Ascending aorta (tissue), 2 donors: ENCODE measurements at regions of chr17 and their contacts with region 1.

Region 1: GRCh38 chr17:55264645-55265298 is at the start of gene HLF:
- DNase-seq: peak in 1 of 2 donors; percentile 86
- H3K4me3 ChIP-seq: peak within 1 kb of the TSS; percentile 60 to 85
- H3K27ac ChIP-seq: peak within 1 kb of the TSS; percentile 85 to 90
- H3K4me1 ChIP-seq: peaks cover 10 to 17% of the 10 kb centered on the region in 2 donors
- H3K27me3 ChIP-seq: no peaks in the 10 kb centered on the region
- CTCF ChIP-seq: no peak
- total RNA-seq, gene HLF: 11.3 TPM

Region 2: GRCh38 chr17:54968262-54968987 is 296.3 kb before region 1 on chr17 and contains the starts of genes COX11 and STXBP4:
- intact Hi-C with region 1: loop called (anchors 2 kb)
- DNase-seq: peak; percentile 90 to 98
- H3K4me3 ChIP-seq: peak within 1 kb of the TSS; percentile 75 to 95
- H3K27ac ChIP-seq: peak within 1 kb of the TSS; percentile 82 to 90
- H3K4me1 ChIP-seq: peaks cover 4 to 11% of the 10 kb centered on the region in 2 donors
- H3K27me3 ChIP-seq: no peaks in the 10 kb centered on the region
- CTCF ChIP-seq: peak in 1 of 3 experiments; percentile 51
- total RNA-seq, gene COX11: 19.6 TPM
- total RNA-seq, gene STXBP4: 4.9 TPM

Region 3: DNA sequence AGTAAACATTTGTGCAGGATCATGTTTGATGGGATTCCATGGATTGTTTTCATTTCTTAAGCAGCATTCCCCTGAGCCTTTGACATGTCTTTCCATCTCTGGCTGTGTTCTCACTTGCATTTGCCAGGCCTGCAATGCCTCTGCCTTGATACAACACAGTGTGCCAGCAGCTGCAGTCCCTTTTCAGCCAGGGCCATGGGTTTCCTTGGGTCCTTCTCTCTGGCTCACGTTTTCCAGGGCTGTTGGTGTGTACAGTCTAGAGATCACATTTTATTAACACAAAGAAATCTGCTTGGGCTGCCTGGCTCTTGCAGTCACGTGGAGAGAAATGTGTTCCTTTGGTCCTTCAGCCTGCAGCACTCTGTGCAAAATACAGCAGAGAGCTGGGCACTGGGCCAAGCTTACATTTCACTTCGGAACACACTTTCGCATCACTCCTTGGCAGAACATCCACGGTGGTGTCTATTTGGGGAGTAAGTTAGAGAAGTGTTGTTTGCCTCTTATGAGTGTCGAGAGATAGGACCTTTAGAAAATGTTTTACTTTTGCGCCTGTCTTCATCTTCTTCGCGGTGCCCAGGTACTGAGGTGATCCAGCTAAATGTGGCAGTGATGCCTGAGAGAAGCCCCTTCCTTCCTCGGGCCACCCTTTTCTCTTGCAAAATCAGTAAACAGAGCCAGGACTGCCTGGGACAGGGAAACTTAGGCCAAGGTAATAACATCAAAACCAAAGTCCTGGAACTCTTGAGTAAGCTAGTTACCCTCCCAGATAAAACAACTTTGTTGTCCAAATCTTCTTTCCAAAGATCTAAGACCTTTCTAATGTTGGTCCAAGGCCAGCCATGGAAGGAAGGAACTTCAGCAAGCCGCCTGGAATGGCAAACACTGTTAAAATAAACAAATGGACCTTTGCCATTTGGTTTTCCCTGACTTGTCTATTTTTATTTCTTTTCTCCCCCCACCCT is 20.8 kb after region 1 on chr17:
- intact Hi-C with region 1: loop called (anchors 1 kb)
- DNase-seq: peak; percentile 66 to 96
- H3K4me3 ChIP-seq: peak overlapping the region; percentile 23 to 43
- H3K27ac ChIP-seq: peak overlapping the region; percentile 83 to 88
- H3K4me1 ChIP-seq: peaks cover 31 to 60% of the 10 kb centered on the region in 2 donors
- H3K27me3 ChIP-seq: no peaks in the 10 kb centered on the region
- CTCF ChIP-seq: no peak

Region 4: GRCh38 chr17:55348749-55349354 is 84.1 kb after region 1 on chr17:
- intact Hi-C with region 1: loop called (anchors 2 kb)
- DNase-seq: peak in 1 of 2 donors; percentile 66
- H3K4me3 ChIP-seq: no peak overlapping the region
- H3K27ac ChIP-seq: no peak overlapping the region
- H3K4me1 ChIP-seq: no peaks in the 10 kb centered on the region
- H3K27me3 ChIP-seq: no peaks in the 10 kb centered on the region
- CTCF ChIP-seq: peak; percentile 69 to 92 (median 82)

Region 5: GRCh38 chr17:55750750-55751657 is 486.2 kb after region 1 on chr17 and contains the start of gene PCTP:
- intact Hi-C with region 1: loop called (anchors 10 kb)
- DNase-seq: peak; percentile 83 to 98
- H3K4me3 ChIP-seq: peak within 1 kb of the TSS; percentile 88 to 94
- H3K27ac ChIP-seq: peak within 1 kb of the TSS; percentile 78 to 80
- H3K4me1 ChIP-seq: peaks cover 0 to 6% of the 10 kb centered on the region in 2 donors
- H3K27me3 ChIP-seq: no peaks in the 10 kb centered on the region
- CTCF ChIP-seq: peak in 2 of 3 experiments; percentile 35 to 39
- total RNA-seq, gene PCTP: 17.8 TPM

Region 6: GRCh38 chr17:57106107-57106835 is 1841.5 kb after region 1 on chr17:
- intact Hi-C with region 1: loop called (anchors 10 kb)
- DNase-seq: no peak
- H3K4me3 ChIP-seq: no peak overlapping the region
- H3K27ac ChIP-seq: peak overlapping the region; percentile 90 to 91
- H3K4me1 ChIP-seq: peaks cover 21 to 47% of the 10 kb centered on the region in 2 donors
- H3K27me3 ChIP-seq: no peaks in the 10 kb centered on the region
- CTCF ChIP-seq: peak in 2 of 3 experiments; percentile 23 to 25